ENCODE measurements at regions of chr1 and their contacts with region 1.

Region 1: DNA sequence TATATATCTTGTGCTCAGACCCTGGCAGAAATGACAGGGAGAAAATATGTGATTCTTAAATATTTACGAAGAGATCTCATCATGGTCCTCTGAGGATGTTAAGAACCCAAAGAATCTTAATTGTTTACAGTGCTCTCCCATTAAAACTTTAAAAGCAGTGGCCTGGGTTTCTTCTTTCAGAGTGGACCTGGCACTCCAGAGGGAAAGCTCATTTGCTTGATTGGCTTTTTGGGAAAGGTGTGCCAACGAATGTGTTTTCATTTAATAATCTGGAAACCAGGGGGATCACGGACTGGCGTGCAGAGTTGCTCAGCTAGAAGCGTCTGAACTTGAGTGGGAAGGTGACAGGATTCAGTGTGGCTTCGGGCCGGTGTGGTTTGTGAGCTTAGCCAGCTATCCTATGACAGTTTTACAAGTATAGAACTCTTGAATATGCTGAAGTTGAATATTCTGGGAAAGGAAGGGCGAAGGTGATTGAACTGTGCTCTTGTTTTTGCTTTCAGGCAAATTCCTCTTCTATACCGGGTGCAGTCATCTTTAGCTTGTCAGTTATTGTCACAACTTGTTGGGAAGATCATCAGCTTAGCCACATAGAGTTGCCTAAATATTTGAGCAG is 154.8 kb downstream of the C1orf21 start:
- DNase-seq: peak; percentile 78
- H3K4me3 ChIP-seq: no peak overlapping the region
- H3K27ac ChIP-seq: peak overlapping the region; percentile 16 to 59 (median 48)
- H3K4me1 ChIP-seq: peaks cover 0 to 29% (median 21%) of the 10 kb centered on the region in 4 donors
- H3K27me3 ChIP-seq: no peaks in the 10 kb centered on the region
- CTCF ChIP-seq: no peak
- EP300 ChIP-seq: peak in 3 of 4 donors; percentile 2 to 69 (median 11)
- POLR2A ChIP-seq: no peak

Region 2: GRCh38 chr1:184622136-184622823 is 80.6 kb after region 1 on chr1:
- intact Hi-C with region 1: loop called (anchors 5 kb)
- DNase-seq: peak; percentile 96
- H3K4me3 ChIP-seq: no peak overlapping the region
- H3K27ac ChIP-seq: peak overlapping the region; percentile 86 to 91 (median 90)
- H3K4me1 ChIP-seq: peaks cover 0 to 71% (median 39%) of the 10 kb centered on the region in 4 donors
- H3K27me3 ChIP-seq: no peaks in the 10 kb centered on the region
- CTCF ChIP-seq: no peak
- EP300 ChIP-seq: peak; percentile 95 to 99 (median 97)
- POLR2A ChIP-seq: no peak

Measured in sigmoid colon (tissue), 7 donors.